Heart left ventricle (tissue), 16 donors: ENCODE measurements at regions of chr4 and their contacts with region 1.

Region 1: GRCh38 chr4:128574706-128575105 is 234.8 kb upstream of the JADE1 start:
- DNase-seq: peak in 4 of 5 donors; percentile 33 to 63 (median 52)
- ATAC-seq: peak; percentile 25 to 62 (median 60)
- H3K4me3 ChIP-seq: no peak overlapping the region
- H3K27ac ChIP-seq: no peak overlapping the region
- H3K4me1 ChIP-seq: peaks cover 3 to 40% (median 17%) of the 10 kb centered on the region in 12 donors
- H3K27me3 ChIP-seq: no peaks in the 10 kb centered on the region
- CTCF ChIP-seq: peak in 11 of 12 donors; percentile 26 to 66 (median 56)
- POLR2A ChIP-seq: no peak

Region 2: DNA sequence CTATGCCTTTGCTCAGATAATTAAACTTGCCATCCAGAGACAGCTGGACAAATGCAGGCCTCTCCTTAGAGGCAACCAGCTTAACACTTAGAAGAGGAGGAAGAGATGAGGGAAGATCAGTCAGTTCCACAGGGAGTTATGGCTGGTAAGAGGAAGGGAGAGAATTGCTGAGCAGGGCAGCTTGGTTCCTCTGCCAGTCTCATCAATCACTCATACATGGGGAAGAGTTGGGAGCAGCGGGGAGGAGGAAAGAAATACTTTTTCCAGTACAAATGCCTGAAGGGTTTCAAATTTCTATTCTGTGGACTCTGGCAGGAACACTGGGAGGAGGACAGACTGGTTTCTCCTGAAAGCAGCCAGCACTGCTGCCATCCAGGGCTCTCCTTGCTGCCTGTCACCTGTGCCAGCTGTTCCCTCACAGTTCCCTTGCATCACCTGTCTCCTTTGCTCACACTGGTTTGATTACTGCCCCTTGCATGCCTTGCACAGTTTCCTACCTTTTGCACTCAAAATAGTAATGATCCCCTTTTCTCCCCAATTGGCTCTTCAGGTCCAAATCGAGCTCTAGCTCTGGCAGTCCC is 346.6 kb before region 1 on chr4:
- intact Hi-C with region 1: no loop called
- DNase-seq: no peak
- ATAC-seq: no peak
- H3K4me3 ChIP-seq: no peak overlapping the region
- H3K27ac ChIP-seq: no peak overlapping the region
- H3K4me1 ChIP-seq: no peaks in the 10 kb centered on the region
- H3K27me3 ChIP-seq: no peaks in the 10 kb centered on the region
- CTCF ChIP-seq: no peak
- POLR2A ChIP-seq: no peak

Region 3: DNA sequence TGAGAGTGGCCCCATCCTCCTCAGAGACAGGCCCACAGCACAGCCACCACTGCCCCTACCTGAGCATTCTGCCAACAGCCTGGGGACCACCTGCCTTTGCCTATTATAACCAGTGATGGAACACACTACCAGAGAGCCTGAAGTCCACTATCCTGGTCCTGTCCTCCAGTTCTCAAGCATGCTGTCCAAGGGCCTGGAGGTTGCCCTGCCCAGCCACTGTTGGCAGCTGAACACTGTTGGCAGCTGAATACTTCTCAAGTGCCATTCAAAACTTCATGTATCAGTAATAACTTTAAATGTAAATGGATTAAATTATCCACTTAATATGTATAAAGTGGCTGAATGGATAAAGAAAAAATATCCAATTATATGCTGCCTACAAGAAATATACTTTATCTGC is 40.5 kb after region 1 on chr4:
- intact Hi-C with region 1: no loop called
- DNase-seq: no peak
- ATAC-seq: peak in 1 of 4 donors; percentile 11
- H3K4me3 ChIP-seq: no peak overlapping the region
- H3K27ac ChIP-seq: no peak overlapping the region
- H3K4me1 ChIP-seq: no peaks in the 10 kb centered on the region
- H3K27me3 ChIP-seq: no peaks in the 10 kb centered on the region
- CTCF ChIP-seq: no peak
- POLR2A ChIP-seq: no peak

Region 4: DNA sequence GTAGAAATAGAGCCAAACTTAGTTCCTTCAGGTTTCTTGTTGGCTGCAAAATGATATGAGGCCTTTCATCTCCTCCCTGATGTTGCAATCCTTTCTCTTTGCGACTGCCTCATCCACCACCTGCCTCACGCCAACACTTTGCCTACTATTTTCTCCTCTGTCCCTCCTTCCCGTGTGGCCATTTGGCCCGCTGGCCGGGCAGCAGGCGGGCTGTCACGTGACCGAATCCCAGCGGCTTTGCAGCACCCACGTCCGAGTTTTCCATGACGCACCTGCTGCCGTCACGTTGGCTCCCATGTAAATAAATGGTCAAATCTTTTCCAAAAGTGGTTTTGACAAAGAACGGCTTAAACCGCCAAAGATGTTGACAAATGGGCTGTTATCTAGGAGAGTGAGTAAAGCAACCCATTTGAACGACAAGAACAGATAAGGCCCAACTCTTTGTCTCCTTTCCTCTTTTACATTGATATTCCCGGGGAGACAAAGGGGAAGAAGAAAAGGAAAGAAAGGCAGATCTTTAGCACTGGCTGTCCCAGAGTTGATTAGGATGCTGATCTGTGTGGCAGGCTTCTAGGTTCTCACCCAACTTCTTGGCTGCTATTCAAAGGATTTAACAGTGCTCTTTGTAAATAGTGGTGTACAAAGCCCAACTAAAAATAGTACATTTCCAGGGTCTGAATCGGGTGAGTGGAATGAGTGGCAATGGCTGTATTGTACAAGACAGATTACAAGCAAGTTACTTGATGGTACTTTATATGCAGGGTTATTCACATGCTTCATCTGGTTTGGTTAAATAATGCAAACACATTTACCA is 60.6 kb after region 1 on chr4:
- intact Hi-C with region 1: loop called in 2 of 10 experiments (anchors 5 to 10 kb)
- DNase-seq: peak; percentile 86 to 95 (median 89)
- ATAC-seq: peak; percentile 70 to 91 (median 91)
- H3K4me3 ChIP-seq: peak overlapping the region in 7 of 12 donors; percentile 3 to 29 (median 20)
- H3K27ac ChIP-seq: peak overlapping the region; percentile 67 to 85 (median 80)
- H3K4me1 ChIP-seq: peaks cover 0 to 24% (median 11%) of the 10 kb centered on the region in 12 donors
- H3K27me3 ChIP-seq: no peaks in the 10 kb centered on the region
- CTCF ChIP-seq: no peak
- POLR2A ChIP-seq: no peak

Region 5: GRCh38 chr4:128653517-128654444 is 79.1 kb after region 1 on chr4:
- intact Hi-C with region 1: loop called in 2 of 10 experiments (anchors 5 kb)
- DNase-seq: peak in 4 of 5 donors; percentile 33 to 74 (median 58)
- ATAC-seq: peak; percentile 83 to 96 (median 94)
- H3K4me3 ChIP-seq: peak overlapping the region in 2 of 12 donors; percentile 18 to 23
- H3K27ac ChIP-seq: peak overlapping the region in 11 of 12 donors; percentile 27 to 79 (median 58)
- H3K4me1 ChIP-seq: peaks cover 0 to 39% (median 10%) of the 10 kb centered on the region in 12 donors
- H3K27me3 ChIP-seq: no peaks in the 10 kb centered on the region
- CTCF ChIP-seq: no peak
- POLR2A ChIP-seq: peak in 1 of 2 donors; percentile 18